A549 (cell line): ENCODE measurements at regions of chr5 and their contacts with region 1.

Region 1: GRCh38 chr5:138528208-138528607 is 14.8 kb downstream of the ETF1 start:
- DNase-seq: no peak
- ATAC-seq: peak in 1 of 2 experiments; percentile 20; a peak in 2 of 6 replicates
- H3K4me3 ChIP-seq: no peak overlapping the region
- H3K27ac ChIP-seq: no peak overlapping the region
- H3K4me1 ChIP-seq: peaks cover 19% of the 10 kb centered on the region; the same call in 2 of the 3 replicates
- CTCF ChIP-seq: no peak
- EP300 ChIP-seq: no peak
- POLR2A ChIP-seq: no peak
- RAD21 ChIP-seq: no peak

Region 2: GRCh38 chr5:138542956-138543729 is 14.9 kb after region 1 on chr5 and contains the start of gene ETF1:
- CTCF ChIA-PET with region 1: interaction called, 7 read pairs
- POLR2A ChIA-PET with region 1: interaction called, 19 read pairs
- DNase-seq: peak; percentile 96 to 99
- ATAC-seq: peak; percentile 83 to 92
- H3K4me3 ChIP-seq: peak within 1 kb of the TSS; percentile 100
- H3K27ac ChIP-seq: peak within 1 kb of the TSS; percentile 93 to 98
- H3K4me1 ChIP-seq: peaks cover 47% of the 10 kb centered on the region
- CTCF ChIP-seq: no peak
- EP300 ChIP-seq: no peak
- POLR2A ChIP-seq: peak; percentile 76
- RAD21 ChIP-seq: no peak
- polyA plus RNA-seq, gene ETF1: 140 and 161 TPM in 2 replicates

Region 3: DNA sequence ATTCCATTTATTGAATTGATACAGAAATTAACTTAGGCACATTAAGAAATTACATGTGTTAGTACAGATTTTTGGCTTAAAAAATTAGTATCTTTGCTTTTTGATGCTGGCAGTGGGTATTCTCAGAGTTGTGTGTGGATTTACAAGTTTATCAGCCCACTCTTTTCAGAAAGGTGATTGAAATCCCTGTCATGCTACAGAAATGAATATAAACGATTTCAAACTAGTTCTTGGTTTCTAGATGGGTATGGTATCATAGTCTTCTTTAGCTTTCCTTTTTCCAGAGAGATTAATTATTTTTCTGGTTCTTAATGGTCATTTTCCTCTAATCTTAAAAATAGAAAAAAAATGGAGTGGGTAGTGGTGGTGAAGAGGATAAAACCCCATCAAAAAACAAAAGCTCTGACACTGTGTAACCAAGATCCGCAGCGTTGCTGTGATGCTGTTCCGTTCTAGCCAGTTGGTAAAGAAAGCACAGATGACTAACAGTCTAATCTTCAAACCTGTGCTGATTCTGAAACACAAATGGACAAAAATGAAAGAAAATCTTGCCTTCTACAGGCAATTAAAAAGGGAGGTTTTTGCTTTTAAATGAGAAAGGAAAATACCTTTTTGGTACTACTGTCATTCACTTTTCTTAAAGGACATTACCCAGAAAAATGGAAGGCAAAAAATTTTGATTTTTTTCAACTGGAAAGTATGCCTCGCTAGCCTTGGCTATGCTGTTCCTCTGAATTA is 341.7 kb after region 1 on chr5:
- CTCF ChIA-PET with region 1: no interaction called
- POLR2A ChIA-PET with region 1: no interaction called
- DNase-seq: no peak
- ATAC-seq: peak; percentile 58 to 78; a peak in 4 of 6 replicates
- H3K4me3 ChIP-seq: no peak overlapping the region
- H3K27ac ChIP-seq: peak overlapping the region in 1 of 2 experiments; percentile 38; a peak in 2 of 6 replicates
- H3K4me1 ChIP-seq: peaks cover 36% of the 10 kb centered on the region
- CTCF ChIP-seq: no peak
- EP300 ChIP-seq: no peak
- POLR2A ChIP-seq: no peak
- RAD21 ChIP-seq: no peak